ENCODE measurements at regions of chr14 and their contacts with region 1.

Region 1: DNA sequence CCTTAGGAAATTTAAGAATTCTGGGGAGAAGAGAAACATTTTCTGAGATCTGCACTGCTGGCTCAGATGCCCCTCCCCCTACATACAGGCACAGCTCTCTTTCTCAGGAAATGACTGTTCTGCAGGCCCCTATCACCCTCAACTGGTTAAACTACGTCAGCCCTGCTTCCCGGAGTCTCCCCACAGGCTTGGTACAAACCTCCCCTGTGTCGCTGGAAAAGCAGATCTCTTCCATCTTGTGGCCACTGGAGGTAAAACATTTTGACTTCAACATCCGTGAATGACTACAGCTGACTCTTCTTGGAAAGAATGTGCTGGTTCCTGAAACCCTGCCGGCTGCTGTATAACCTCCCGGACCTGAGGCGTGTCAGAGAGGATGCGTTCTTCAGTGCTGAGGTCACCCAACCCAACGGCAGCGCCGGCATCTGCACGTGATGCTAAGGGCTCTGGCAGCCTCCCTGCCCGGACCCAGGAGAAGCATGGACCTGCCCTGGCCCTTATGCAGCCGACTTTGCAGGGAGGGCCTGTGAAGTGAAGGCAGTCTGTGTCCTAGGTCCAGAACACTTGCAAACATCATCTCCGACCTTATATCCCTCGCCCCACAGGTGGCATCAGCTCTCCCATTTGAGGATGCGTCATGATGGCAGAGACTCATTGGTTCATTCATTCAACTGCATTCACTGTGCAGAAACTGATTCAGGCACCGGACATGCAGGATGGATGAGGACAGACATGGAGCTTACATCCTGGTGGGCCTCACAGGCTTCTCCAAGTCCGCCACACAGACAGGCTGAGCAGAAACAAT is 129.3 kb downstream of the GCH1 start:
- DNase-seq: peak; percentile 99
- H3K4me3 ChIP-seq: no peak overlapping the region
- H3K27ac ChIP-seq: peak overlapping the region; percentile 99
- H3K4me1 ChIP-seq: peaks cover 28% of the 10 kb centered on the region
- H3K27me3 ChIP-seq: no peaks in the 10 kb centered on the region
- CTCF ChIP-seq: peak; percentile 66 to 71
- POLR2A ChIP-seq: peak; percentile 80

Region 2: DNA sequence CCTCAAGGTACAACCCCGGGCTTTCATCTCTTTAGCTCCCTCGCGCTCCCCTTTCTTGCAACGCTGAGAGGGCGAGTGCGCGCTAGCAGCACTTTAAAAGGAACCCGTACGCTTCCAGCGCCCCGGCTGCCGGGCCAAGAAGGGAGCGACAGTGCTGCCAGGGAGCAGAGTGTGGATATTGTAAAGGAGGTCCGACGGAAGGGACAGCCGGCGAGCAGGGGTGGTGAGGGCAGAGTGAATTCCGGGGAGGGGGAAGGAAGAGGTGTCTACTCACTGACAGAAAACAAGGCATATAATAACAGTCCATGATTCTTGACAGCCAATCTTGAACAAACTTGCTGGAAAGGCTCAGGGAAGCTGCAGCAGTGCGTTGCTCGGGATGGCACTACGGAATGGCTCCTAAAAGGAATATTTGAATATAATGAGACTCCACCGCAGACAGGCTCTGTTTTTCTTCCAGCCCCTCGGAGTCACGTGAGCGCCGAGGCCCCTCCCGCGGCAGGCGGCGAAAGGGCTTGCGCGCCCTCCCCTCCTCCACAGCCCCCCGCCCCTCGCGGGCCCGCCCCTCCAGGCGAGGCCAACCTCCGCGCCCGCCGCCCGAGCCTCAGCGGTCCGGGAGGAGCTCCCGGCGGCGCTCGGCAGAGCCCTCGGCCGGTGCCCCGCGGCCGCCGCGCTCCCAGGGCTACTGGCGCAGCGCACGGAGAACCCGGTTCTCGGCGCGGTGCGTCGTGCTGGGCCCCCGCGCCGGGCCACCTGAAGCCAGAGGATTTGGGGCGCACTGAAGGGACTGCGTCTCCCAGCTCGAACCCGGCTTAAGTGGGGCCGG is 820.2 kb before region 1 on chr14:
- CTCF ChIA-PET with region 1: no interaction called
- POLR2A ChIA-PET with region 1: no interaction called
- dilution Hi-C with region 1: no loop called
- intact Hi-C with region 1: no loop called
- DNase-seq: peak; percentile 94
- H3K4me3 ChIP-seq: peak overlapping the region; percentile 77 to 99 (median 86)
- H3K27ac ChIP-seq: peak overlapping the region; percentile 73
- H3K4me1 ChIP-seq: peaks cover 35% of the 10 kb centered on the region
- H3K27me3 ChIP-seq: no peaks in the 10 kb centered on the region
- CTCF ChIP-seq: no peak
- POLR2A ChIP-seq: peak; percentile 99

Region 3: GRCh38 chr14:54503476-54504257 is 269.7 kb before region 1 on chr14:
- CTCF ChIA-PET with region 1: interaction called, 18 read pairs
- POLR2A ChIA-PET with region 1: no interaction called
- dilution Hi-C with region 1: no loop called
- intact Hi-C with region 1: no loop called
- DNase-seq: peak; percentile 37
- H3K4me3 ChIP-seq: no peak overlapping the region
- H3K27ac ChIP-seq: no peak overlapping the region
- H3K4me1 ChIP-seq: no peaks in the 10 kb centered on the region
- H3K27me3 ChIP-seq: peaks cover 0 to 8% of the 10 kb centered on the region in 2 experiments
- CTCF ChIP-seq: peak; percentile 39 to 43
- POLR2A ChIP-seq: no peak

Region 4: DNA sequence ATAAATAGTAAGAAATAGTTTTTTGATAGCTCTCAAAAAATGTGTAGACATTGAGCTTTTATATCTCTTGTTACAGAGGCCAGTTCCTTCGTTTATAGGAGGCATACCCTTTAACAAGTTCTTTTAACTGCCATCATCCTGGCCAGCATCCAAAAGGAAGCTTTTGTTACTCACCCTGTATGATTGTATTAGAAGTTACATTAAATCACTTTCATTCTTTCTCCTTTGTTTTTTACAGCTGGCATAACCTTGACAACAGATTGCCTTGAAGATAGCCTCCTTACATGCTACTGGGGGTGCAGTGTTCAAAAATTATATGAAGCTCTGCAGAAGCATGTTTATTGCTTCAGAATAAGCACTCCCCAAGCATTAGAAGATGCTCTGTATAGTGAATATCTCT is 243.6 kb before region 1 on chr14:
- CTCF ChIA-PET with region 1: interaction called, 11 read pairs
- POLR2A ChIA-PET with region 1: no interaction called
- dilution Hi-C with region 1: no loop called
- intact Hi-C with region 1: no loop called
- DNase-seq: peak; percentile 90
- H3K4me3 ChIP-seq: no peak overlapping the region
- H3K27ac ChIP-seq: no peak overlapping the region
- H3K4me1 ChIP-seq: peaks cover 9% of the 10 kb centered on the region
- H3K27me3 ChIP-seq: no peaks in the 10 kb centered on the region
- CTCF ChIP-seq: no peak
- POLR2A ChIP-seq: no peak

Region 5: GRCh38 chr14:54652188-54652587 is 121.2 kb before region 1 on chr14:
- CTCF ChIA-PET with region 1: interaction called, 42 read pairs
- POLR2A ChIA-PET with region 1: interaction called, 7 read pairs
- dilution Hi-C with region 1: no loop called
- intact Hi-C with region 1: loop called (anchors 1 kb)
- DNase-seq: peak; percentile 96
- H3K4me3 ChIP-seq: peak overlapping the region; percentile 29 to 80 (median 30)
- H3K27ac ChIP-seq: peak overlapping the region; percentile 100
- H3K4me1 ChIP-seq: peaks cover 62% of the 10 kb centered on the region
- H3K27me3 ChIP-seq: no peaks in the 10 kb centered on the region
- CTCF ChIP-seq: no peak
- POLR2A ChIP-seq: no peak

Region 6: DNA sequence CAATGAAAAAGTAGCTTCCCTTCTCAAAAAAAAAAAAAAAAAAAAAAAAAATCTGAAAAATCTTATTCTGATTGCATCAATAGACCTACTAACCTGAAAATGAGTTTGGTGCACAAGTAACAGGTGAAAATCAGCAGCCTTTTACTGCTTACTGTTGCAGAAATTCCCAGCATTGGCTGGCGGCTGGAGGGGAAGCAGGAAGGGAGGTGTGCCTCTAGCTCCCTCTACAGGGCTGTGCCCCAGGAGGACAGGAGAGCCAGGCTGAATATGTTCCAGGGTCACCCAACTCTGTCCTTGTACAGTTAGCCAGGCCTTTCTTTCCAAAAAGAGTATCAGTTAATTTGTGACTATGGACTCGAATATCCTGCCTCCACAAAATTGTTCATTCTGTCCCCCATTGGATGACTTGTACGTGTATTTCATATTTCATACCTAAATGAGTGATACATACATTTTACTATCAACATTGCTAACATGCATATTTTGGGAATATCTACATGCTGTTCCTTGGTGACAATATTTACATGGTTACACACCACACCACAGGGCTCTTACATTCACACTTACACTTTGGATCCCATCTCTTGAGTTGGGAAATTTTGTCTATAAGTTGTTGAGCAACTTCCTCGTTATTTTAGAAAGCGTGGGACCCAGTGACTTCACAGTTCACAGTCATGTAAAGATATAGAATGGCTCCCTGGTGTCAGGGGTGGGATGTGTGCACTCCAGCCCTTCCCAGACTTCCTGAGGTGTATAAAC is 81.7 kb before region 1 on chr14:
- CTCF ChIA-PET with region 1: interaction called, 18 read pairs
- POLR2A ChIA-PET with region 1: no interaction called
- dilution Hi-C with region 1: no loop called
- intact Hi-C with region 1: loop called (anchors 1 kb)
- DNase-seq: peak; percentile 82
- H3K4me3 ChIP-seq: no peak overlapping the region
- H3K27ac ChIP-seq: peak overlapping the region; percentile 25
- H3K4me1 ChIP-seq: peaks cover 18% of the 10 kb centered on the region
- H3K27me3 ChIP-seq: no peaks in the 10 kb centered on the region
- CTCF ChIP-seq: peak; percentile 89 to 92
- POLR2A ChIP-seq: no peak

Region 7: DNA sequence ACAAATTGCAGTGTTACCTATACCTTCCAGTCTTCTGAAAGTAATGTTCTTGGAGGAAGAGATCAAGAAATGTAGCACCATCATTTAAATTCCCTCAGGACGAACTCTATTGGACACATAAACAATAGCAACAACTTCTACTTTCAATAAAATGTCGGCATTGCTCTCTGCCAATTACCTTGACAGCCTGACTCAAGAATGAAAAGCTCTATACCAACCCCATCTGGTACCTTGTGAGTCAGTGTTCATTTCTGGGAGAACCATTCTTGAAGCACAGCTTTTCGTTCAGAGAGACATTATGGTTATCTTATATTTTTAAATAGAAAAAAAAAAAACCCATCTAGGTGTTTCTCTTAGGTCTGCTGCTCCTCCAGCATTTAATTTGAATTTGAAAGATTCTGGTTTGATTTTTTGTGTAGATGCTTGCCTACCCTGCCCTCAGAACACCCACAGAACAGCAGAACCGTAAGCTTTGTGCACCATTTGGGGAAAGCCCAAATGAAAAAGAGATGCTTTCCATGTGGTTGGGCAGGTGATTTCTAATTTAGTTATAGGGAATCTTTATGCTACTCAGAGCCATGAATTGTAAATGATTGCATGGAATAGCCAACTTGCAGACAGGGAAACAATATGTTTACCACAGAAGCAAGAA is 50.5 kb before region 1 on chr14:
- CTCF ChIA-PET with region 1: interaction called, 38 read pairs
- POLR2A ChIA-PET with region 1: interaction called, 4 read pairs
- dilution Hi-C with region 1: no loop called
- intact Hi-C with region 1: loop called (anchors 1 kb)
- DNase-seq: peak; percentile 47
- H3K4me3 ChIP-seq: no peak overlapping the region
- H3K27ac ChIP-seq: no peak overlapping the region
- H3K4me1 ChIP-seq: peaks cover 6% of the 10 kb centered on the region
- H3K27me3 ChIP-seq: no peaks in the 10 kb centered on the region
- CTCF ChIP-seq: peak; percentile 24 to 30
- POLR2A ChIP-seq: no peak

Measured in endothelial cell of umbilical vein (primary cell).